ENCODE measurements at regions of chr2 and their contacts with region 1.

Region 1: DNA sequence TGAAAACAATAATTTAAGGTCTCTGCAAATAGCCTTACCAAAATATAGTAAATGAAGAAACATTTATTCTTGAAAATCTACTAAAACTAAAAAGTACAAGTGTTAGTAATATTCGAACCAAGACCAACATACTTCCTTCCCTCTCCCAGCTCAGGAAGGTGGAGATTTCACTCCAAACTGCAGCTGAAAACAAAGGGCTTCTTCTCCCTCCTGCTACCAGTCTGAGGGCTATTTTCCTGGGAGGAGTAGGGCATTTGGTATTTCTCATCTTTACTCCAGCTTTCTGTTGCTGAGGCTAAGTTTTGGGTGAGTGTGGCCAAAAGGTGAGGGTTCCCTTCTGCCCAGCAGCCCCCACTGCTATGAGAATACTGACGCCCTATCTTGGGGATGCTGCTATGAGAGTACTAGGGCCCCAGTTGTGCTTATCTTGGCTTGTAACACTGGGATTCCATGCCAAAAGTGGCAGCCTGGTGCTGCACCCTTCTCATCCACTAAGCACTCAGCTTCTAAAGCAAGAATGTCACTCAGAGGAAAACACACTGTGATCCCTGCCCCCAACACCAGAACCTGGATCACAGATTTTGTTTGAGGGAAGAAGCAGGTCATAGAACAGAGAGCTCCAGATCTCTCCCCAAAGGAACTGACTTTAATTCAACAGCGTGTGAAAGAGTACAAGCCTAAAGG is 130.7 kb upstream of the KLF7 start:
- DNase-seq: no peak
- H3K4me3 ChIP-seq: no peak overlapping the region
- H3K27ac ChIP-seq: no peak overlapping the region
- H3K4me1 ChIP-seq: no peaks in the 10 kb centered on the region
- H3K27me3 ChIP-seq: no peaks in the 10 kb centered on the region
- CTCF ChIP-seq: no peak

Region 2: DNA sequence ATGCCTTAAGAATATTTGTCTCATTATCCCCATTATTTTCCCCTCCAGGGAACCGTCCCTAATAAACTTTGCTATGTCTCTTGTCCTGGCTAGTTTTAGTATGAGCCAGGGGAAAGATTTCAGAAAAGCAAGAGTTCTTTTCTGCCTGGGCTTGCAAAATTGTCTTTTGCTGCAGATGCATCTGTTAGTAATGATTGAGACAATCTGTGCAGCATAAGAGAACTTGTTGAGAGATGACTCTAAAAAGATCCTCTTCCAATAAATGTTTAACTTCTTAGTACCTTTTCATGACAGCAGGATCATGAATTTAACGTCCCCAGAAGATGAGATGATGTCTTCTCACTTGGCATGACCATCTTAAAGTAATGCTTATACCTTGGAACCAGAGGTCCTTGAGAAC is 60.8 kb after region 1 on chr2:
- CTCF ChIA-PET with region 1: no interaction called
- POLR2A ChIA-PET with region 1: interaction called, 14 read pairs
- intact Hi-C with region 1: no loop called
- DNase-seq: no peak
- H3K4me3 ChIP-seq: no peak overlapping the region
- H3K27ac ChIP-seq: no peak overlapping the region
- H3K4me1 ChIP-seq: no peaks in the 10 kb centered on the region
- H3K27me3 ChIP-seq: no peaks in the 10 kb centered on the region
- CTCF ChIP-seq: no peak

Measured in PC-9 (cell line).